ENCODE measurements at regions of chr7 and their contacts with region 1.

Region 1: GRCh38 chr7:114874170-114874569 is 47.7 kb upstream of the MDFIC start:
- DNase-seq: no peak
- CTCF ChIP-seq: no peak

Region 2: DNA sequence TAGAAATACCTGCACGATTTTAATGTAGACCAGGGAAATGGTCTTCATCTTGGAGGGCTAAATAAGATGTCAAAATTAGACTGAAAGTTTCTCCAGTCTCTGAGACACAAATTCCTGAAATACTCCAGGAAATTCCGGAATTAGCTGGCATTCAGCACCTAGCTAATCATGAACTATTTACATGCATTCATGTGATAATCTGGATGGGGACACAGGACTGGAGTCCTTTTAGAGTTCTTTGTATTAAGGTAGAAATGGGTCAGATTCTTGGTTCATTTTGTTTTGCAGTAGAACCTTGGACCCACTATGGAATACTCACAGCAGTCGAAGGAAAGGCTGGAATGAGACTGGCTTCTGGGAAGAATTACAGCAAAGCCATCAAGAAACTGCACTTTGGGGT is 17.5 kb before region 1 on chr7:
- CTCF ChIA-PET with region 1: interaction called, 16 read pairs
- POLR2A ChIA-PET with region 1: no interaction called
- DNase-seq: no peak
- CTCF ChIP-seq: no peak

Measured in GM10248 (cell line).